AG04450 (cell line): ENCODE measurements at regions of chr1 and their contacts with region 1.

Region 1: GRCh38 chr1:42971841-42972291 is 13.2 kb upstream of the SLC2A1 start:
- DNase-seq: peak; percentile 78
- H3K4me3 ChIP-seq: no peak overlapping the region
- H3K27ac ChIP-seq: peak overlapping the region; percentile 75
- H3K27me3 ChIP-seq: no peaks in the 10 kb centered on the region
- CTCF ChIP-seq: no peak

Region 2: DNA sequence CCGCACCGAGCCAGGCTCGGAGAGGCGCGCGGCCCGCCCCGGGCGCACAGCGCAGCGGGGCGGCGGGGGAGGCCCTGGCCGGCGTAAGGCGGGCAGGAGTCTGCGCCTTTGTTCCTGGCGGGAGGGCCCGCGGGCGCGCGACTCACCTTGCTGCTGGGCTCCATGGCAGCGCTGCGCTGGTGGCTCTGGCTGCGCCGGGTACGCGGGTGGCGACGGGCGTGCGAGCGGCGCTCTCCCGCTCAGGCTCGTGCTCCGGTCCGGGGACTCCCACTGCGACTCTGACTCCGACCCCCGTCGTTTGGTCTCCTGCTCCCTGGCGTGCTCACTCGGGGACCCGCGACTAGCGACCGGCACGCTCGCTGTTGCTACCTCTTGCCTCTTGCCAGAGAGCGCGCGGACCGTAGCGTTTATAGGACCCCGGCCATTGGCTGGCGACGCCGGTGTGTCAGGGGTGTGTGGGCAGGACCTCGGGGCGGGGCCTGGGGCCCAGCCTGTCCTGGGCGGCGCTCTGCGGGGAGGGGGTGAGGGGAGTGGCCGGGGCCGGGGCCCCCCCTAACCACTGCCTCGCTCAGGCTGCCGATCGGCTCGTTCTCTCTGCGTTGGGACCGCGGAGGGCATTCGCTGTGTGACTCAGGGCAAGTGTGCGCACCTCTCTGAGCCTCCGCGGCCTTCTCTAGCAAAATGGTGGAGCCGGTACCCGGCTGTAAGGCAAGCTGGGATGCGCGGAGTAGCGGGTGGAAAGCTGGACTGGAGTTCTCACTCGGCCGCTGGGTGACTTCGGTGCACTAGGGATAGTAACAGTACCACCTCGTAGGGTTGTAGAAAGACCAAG is 13.2 kb before region 1 on chr1 and contains the start of gene SLC2A1:
- CTCF ChIA-PET with region 1: no interaction called
- POLR2A ChIA-PET with region 1: interaction called, 20 read pairs
- DNase-seq: peak; percentile 86
- H3K4me3 ChIP-seq: peak within 1 kb of the TSS; percentile 83
- H3K27ac ChIP-seq: peak within 1 kb of the TSS; percentile 68
- H3K27me3 ChIP-seq: no peaks in the 10 kb centered on the region
- CTCF ChIP-seq: no peak
- polyA plus RNA-seq, gene SLC2A1: 114 and 140 TPM in 2 replicates

Region 3: DNA sequence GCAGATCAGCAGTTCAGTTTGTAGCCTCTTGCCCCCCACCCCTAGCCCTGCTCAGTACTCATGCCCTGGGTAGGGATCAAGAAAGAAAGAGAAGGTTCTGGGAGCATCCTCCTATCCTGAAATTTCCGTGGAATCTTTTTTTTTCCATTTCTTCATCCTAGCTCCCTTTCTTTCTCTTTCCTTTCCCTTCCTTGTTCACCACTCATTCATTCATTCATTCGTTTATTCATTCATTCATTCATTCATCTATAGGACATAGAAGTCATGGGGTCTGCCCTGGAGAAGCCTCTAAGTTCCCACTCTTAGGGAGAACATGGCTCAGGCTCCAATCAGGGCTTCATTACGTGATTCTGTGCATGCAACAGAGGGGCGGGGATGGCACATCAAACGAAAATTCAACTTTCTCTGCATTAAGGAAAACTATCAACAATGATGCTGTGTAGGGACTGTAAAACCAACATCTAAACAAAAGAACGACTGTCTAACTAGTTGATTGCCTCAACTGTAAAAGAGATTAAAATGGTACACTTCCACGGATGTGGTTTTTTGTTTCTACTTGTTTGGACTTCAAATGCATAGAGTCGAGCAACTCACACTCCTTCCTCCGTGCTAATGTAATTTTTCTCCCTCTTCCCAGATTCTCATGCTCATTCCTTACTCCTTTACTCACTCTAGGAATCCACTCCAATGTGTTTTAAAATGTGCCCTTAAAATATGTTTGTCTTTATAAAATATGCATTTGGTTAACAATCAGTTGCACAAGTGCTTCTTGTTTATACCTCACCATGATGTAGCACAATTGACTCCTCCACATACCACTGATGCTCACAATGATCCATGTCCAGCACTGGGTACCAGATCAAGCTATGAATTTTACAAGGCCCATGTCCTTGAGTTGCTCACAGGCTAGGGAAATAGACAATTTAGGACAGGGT is 88.0 kb after region 1 on chr1:
- CTCF ChIA-PET with region 1: no interaction called
- POLR2A ChIA-PET with region 1: interaction called, 11 read pairs
- DNase-seq: peak; percentile 29
- H3K4me3 ChIP-seq: no peak overlapping the region
- H3K27ac ChIP-seq: peak overlapping the region; percentile 73
- H3K27me3 ChIP-seq: peaks cover 5% of the 10 kb centered on the region
- CTCF ChIP-seq: no peak